Right ventricle myocardium inferior (tissue), 1 donor: ENCODE measurements at regions of chr11 and their contacts with region 1.

Region 1: GRCh38 chr11:75022759-75023396 is 34.1 kb downstream of the NEU3 start:
- DNase-seq: peak; percentile 75
- ATAC-seq: peak; percentile 88

Region 2: DNA sequence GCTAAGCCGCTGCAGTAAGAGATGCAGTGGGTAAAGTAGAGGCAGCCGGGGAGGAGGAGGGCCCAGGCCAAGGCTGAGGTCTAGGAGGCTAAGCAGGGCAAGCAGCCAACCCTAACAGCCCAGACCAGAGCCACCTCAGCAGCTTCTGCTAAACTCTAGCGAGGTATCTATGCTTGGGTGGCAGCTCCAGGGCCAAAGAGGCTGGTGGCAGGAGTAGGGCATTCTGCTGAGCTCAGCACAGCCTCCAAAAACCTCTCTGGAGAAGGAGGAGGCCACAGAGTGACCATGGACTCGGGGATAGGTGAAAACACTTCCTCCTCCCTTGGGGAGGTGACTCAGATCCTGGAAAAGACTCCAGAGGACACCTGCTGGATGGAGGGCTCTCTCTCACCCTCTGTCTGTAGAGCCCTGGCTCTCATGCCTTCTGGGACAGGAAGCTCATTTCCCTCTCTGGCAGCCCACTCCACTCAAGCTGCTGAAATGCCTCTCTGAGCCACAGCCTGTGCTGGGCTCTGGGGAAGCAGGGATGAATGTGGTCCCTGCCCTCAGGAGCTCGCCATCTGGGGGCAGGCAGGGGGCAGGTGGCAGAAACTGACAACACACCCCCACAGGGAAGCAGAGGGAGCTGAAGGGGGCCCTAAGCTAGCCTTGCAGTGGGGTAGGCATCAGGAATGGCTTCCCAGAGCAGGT is 201.2 kb after region 1 on chr11:
- intact Hi-C with region 1: no loop called
- DNase-seq: no peak
- ATAC-seq: no peak

Region 3: GRCh38 chr11:75248690-75249268 is 225.9 kb after region 1 on chr11:
- intact Hi-C with region 1: loop called (anchors 2 kb)
- DNase-seq: peak; percentile 88
- ATAC-seq: peak; percentile 93